ENCODE measurements at regions of chr10 and their contacts with region 1.

Region 1: DNA sequence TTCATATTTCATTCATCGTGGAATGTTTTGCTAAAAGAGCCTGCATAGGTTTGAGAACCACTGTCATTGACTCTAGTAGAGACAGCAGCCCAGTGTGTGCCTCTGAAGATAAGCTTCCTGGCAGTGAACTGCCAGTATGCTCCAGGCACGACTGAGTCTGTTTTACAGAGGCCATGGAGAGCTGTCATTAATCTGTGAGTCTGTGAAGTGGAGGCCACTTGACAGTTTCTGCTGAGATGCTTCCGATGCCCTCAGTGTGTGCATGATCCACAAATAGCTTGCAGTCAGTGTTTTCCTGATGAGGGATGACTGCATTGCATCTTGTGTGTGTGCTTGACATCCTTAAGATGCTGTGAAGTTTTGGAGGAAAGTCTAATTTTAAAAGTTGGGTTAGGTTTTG is 162.2 kb downstream of the PFKFB3 start:
- DNase-seq: no peak
- ATAC-seq: no peak
- H3K4me3 ChIP-seq: no peak overlapping the region
- H3K4me3 Mint-ChIP-seq: no peak overlapping the region
- H3K27ac ChIP-seq: no peak overlapping the region
- H3K27ac Mint-ChIP-seq: no peak overlapping the region
- H3K4me1 ChIP-seq: no peaks in the 10 kb centered on the region
- H3K4me1 Mint-ChIP-seq: peaks cover 0 to 4% (median 0%) of the 10 kb centered on the region in 7 donors
- H3K27me3 ChIP-seq: no peaks in the 10 kb centered on the region
- H3K27me3 Mint-ChIP-seq: no peaks in the 10 kb centered on the region

Region 2: GRCh38 chr10:6382081-6382480 is 17.2 kb after region 1 on chr10:
- CTCF ChIA-PET with region 1: interaction called, 3 read pairs
- POLR2A ChIA-PET with region 1: interaction called, 15 read pairs
- intact Hi-C with region 1: no loop called
- DNase-seq: peak in 7 of 9 donors; percentile 40 to 63 (median 53)
- ATAC-seq: peak; percentile 53
- H3K4me3 ChIP-seq: peak overlapping the region; percentile 30
- H3K4me3 Mint-ChIP-seq: peak overlapping the region; percentile 52 to 84 (median 72)
- H3K27ac ChIP-seq: no peak overlapping the region
- H3K27ac Mint-ChIP-seq: peak overlapping the region; percentile 9 to 86 (median 76)
- H3K4me1 ChIP-seq: peaks cover 0 to 17% of the 10 kb centered on the region in 2 donors
- H3K4me1 Mint-ChIP-seq: peaks cover 11 to 27% (median 20%) of the 10 kb centered on the region in 7 donors
- H3K27me3 ChIP-seq: no peaks in the 10 kb centered on the region
- H3K27me3 Mint-ChIP-seq: no peaks in the 10 kb centered on the region

Region 3: DNA sequence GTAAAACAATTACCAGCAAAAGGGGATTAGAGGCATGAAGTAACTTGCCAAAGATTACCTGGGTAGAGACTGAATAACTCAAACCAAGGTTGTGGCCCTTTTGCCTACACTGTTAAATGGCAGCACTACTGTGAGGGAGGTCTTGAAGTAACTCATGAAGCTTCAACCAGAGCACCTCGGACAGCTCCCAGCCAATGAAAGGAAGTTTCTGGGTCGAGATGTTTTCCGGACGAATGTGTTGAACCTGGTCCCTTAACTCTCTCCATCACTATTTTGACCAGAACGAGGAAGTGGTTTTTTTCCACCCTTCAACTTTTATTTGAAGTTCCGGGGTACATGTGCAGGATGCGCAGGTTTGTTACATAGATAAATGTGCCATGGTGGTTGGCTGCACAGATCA is 348.8 kb after region 1 on chr10:
- CTCF ChIA-PET with region 1: no interaction called
- POLR2A ChIA-PET with region 1: no interaction called
- intact Hi-C with region 1: no loop called
- DNase-seq: peak in 6 of 9 donors; percentile 4 to 33 (median 19)
- ATAC-seq: no peak
- H3K4me3 ChIP-seq: no peak overlapping the region
- H3K4me3 Mint-ChIP-seq: no peak overlapping the region
- H3K27ac ChIP-seq: no peak overlapping the region
- H3K27ac Mint-ChIP-seq: no peak overlapping the region
- H3K4me1 ChIP-seq: peaks cover 0 to 6% of the 10 kb centered on the region in 2 donors
- H3K4me1 Mint-ChIP-seq: peaks cover 2 to 13% (median 7%) of the 10 kb centered on the region in 7 donors
- H3K27me3 ChIP-seq: no peaks in the 10 kb centered on the region
- H3K27me3 Mint-ChIP-seq: peaks cover 23 to 54% (median 29%) of the 10 kb centered on the region in 5 donors

Measured in naive thymus-derived CD4-positive, alpha-beta T cell (primary cell).